ENCODE measurements at regions of chr20 and their contacts with region 1.

Region 1: DNA sequence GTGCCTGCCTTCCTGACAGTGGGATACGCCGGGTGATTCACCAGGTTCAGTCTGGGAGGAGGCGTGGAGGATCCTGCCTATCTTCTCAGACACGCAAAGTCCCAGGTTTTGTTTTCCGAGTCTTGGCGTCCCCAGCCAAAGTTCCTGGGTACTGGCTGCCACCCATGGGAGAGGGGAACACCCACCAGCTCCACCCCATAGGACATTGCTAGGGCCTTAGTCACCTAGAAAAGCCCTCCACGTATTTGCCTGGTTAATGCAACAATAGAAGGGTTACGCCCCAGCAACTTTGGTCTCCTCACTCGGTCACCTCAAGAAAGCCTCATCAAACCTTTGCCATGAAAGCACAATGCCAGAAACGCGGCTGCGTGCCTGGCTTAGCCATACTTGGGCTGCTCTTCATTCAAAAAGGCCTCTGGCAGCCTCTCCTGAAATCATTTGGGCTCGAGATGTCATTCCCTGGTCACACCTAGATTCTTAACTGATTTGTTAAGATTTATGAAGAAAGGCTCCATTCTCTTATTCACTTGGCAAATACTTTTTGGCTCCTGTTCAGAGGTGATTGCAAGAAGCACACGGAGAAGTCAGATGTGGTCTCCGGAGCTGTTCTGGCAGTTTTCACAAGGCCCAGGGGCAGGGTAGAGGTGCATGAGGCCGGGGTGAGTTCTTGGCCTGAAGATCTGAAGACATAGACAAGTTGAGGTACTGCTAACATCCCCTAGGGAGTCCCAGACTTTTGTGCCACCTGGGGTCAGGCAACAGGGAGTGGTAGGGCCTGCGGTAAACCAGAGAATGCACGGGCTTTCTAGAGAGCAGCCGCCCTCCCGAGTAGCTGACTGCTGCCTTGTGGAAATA is 35.5 kb upstream of the ZNF133 start:
- DNase-seq: peak; percentile 99
- ATAC-seq: peak; percentile 94
- H3K4me3 ChIP-seq: peak overlapping the region; percentile 28; the same call in 1 of the 2 replicates
- H3K27ac ChIP-seq: peak overlapping the region; percentile 96
- H3K4me1 ChIP-seq: peaks cover 35% of the 10 kb centered on the region
- H3K27me3 ChIP-seq: no peaks in the 10 kb centered on the region
- CTCF ChIP-seq: no peak

Region 2: DNA sequence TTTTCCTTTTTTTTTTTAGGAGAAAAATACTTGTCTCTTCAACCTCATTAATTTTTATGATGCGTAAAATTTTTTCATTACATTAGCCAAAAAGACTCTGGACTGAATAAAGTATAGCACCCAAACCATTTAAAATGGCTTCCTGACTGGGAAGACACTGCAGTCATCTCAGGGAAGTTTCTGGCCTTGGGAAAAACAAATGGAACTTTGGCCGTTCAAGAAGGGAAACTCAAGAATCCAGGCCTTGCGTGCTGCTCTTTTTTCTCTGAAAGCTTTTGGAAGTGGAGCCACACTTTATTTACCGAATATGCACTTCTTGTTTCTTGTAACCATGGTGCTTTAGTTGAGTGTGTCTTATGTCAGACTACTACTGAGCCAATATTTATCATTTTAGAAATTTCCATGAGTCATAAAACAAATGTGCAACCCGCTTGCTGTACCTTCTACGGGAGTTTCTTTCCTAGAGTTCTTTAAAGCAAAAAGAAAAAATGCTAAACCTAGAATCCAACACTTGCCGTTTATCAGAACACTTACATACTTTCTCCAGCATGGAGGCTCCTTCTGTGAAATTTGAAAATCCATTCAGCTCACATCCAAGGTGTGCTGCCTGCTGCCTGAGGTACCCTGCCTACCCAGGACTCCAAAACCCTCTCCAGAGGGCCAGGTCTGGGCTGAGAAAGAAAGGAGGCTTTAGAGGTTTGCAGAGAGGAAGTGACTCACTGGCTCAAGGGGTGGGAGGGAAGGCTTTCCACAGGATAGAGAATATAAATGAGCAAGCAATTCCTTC is 694.5 kb before region 1 on chr20:
- CTCF ChIA-PET with region 1: no interaction called
- POLR2A ChIA-PET with region 1: no interaction called
- intact Hi-C with region 1: loop called (anchors 5 kb)
- DNase-seq: peak; percentile 95
- ATAC-seq: peak; percentile 76
- H3K4me3 ChIP-seq: peak overlapping the region; percentile 64
- H3K27ac ChIP-seq: peak overlapping the region; percentile 98
- H3K4me1 ChIP-seq: peaks cover 50% of the 10 kb centered on the region
- H3K27me3 ChIP-seq: no peaks in the 10 kb centered on the region
- CTCF ChIP-seq: no peak

Region 3: GRCh38 chr20:18137412-18138265 is 115.2 kb before region 1 on chr20 and contains the starts of genes KAT14 and PET117:
- CTCF ChIA-PET with region 1: no interaction called
- POLR2A ChIA-PET with region 1: no interaction called
- intact Hi-C with region 1: loop called (anchors 2 kb)
- DNase-seq: peak; percentile 95
- ATAC-seq: peak; percentile 88
- H3K4me3 ChIP-seq: peak within 1 kb of the TSS; percentile 92
- H3K27ac ChIP-seq: peak within 1 kb of the TSS; percentile 69
- H3K4me1 ChIP-seq: peaks cover 33% of the 10 kb centered on the region
- H3K27me3 ChIP-seq: no peaks in the 10 kb centered on the region
- CTCF ChIP-seq: no peak
- total RNA-seq, gene KAT14: 10.8 and 12.5 TPM in 2 replicates
- total RNA-seq, gene PET117: 21.2 and 31.2 TPM in 2 replicates

Region 4: GRCh38 chr20:18224968-18225568 is 27.8 kb before region 1 on chr20:
- CTCF ChIA-PET with region 1: no interaction called
- POLR2A ChIA-PET with region 1: interaction called, 3 read pairs
- intact Hi-C with region 1: loop called (anchors 2 kb)
- DNase-seq: peak; percentile 82
- ATAC-seq: peak; percentile 77
- H3K4me3 ChIP-seq: peak overlapping the region; percentile 47
- H3K27ac ChIP-seq: peak overlapping the region; percentile 69
- H3K4me1 ChIP-seq: peaks cover 24% of the 10 kb centered on the region
- H3K27me3 ChIP-seq: no peaks in the 10 kb centered on the region
- CTCF ChIP-seq: no peak

Region 5: GRCh38 chr20:18287915-18288748 is 35.3 kb after region 1 on chr20 and contains the start of gene ZNF133:
- CTCF ChIA-PET with region 1: no interaction called
- POLR2A ChIA-PET with region 1: interaction called, 7 read pairs
- intact Hi-C with region 1: loop called (anchors 1 kb)
- DNase-seq: peak; percentile 98
- ATAC-seq: peak; percentile 97
- H3K4me3 ChIP-seq: peak within 1 kb of the TSS; percentile 98
- H3K27ac ChIP-seq: peak within 1 kb of the TSS; percentile 76
- H3K4me1 ChIP-seq: peaks cover 22% of the 10 kb centered on the region
- H3K27me3 ChIP-seq: no peaks in the 10 kb centered on the region
- CTCF ChIP-seq: peak; percentile 27; the same call in 1 of the 2 replicates
- total RNA-seq, gene ZNF133: 16.3 and 17.1 TPM in 2 replicates

Measured in PC-3 (cell line).